CD4-positive, alpha-beta T cell (primary cell): ENCODE measurements at regions of chr15 and their contacts with region 1.

Region 1: DNA sequence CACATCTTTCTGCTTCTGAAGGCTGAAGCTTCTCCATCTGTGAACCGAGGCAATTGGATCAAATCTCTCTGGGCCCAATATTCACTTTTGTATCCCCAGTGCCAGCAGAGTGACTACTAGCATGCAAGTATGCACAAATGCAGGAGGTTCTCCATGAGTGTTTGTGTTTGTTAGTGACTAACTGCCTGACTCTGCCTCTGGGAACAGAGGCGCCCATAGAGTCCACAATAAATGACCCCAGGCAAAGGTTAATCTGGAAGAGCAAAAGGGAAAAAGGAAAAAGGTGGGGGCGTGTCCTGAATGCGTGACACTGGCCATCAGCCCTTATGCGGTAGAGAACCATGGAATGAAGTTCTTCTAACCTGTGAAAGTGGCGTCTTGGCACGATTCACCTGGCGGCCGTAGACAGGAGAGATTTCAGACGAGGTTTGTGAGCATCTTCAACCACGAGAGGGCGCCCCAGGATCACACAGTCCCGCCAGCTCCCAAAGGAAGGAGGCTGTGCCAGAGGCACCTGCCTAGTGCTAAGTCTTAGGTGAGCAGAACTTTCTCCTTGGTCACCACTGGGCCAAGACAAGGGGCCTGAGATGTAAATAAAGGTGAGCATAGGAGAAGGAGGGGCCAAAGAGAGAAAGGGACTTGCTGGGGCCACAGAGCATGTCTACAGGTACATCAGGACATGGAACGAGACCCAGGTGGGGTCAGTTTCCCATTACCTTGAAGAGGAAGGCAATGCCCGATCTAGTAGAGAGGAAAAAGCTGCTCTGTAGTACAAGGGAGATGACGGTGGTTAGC is 44.2 kb downstream of the RBPMS2 start:
- DNase-seq: peak; percentile 76 to 94 (median 85)
- ATAC-seq: peak; percentile 80
- H3K4me3 ChIP-seq: no peak overlapping the region
- H3K4me3 Mint-ChIP-seq: no peak overlapping the region
- H3K27ac ChIP-seq: no peak overlapping the region
- H3K27ac Mint-ChIP-seq: no peak overlapping the region
- H3K4me1 ChIP-seq: peaks cover 9% of the 10 kb centered on the region
- H3K4me1 Mint-ChIP-seq: peaks cover 8% of the 10 kb centered on the region
- H3K27me3 ChIP-seq: no peaks in the 10 kb centered on the region
- H3K27me3 Mint-ChIP-seq: peaks cover 9% of the 10 kb centered on the region
- CTCF ChIP-seq: peak; percentile 85

Region 2: DNA sequence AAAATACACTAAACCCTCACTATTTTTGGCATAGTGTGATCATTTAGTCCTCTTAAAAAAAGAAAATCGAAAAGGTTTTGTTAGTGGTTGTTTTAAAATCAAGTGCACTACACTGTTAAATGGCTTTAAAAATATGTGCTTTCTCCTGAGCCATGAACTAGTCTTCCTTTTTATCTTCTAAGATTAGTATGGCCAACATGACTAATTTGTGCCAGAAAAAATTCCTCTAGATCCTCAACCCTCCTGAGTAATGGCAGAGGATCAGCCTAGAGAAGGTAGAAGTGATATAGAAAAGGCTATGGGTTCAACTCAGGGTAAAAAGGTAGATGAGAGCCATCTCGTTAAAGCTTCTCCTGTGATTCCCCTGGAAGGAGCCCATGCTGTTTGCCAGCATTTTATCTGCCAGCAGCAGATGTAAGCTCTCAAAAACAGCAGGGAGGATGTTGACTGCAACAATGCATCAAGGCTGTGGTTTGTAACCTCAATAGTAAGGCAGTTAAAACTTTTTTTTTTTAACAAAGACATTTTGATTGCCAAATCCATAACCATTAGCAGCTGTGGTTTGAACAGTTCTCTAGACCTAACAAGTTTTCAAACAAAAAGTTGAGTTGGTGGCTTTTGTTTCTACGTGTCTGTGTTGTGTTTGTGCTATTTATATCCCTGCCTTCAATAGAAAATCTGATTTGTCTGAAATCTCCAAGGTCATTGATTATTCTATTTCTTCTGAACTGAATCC is 301.0 kb before region 1 on chr15:
- CTCF ChIA-PET with region 1: no interaction called
- POLR2A ChIA-PET with region 1: no interaction called
- intact Hi-C with region 1: loop called in 1 of 2 experiments (anchors 1 kb)
- DNase-seq: peak in 13 of 14 experiments; percentile 17 to 85 (median 37)
- ATAC-seq: peak; percentile 91
- H3K4me3 ChIP-seq: peak overlapping the region; percentile 12
- H3K4me3 Mint-ChIP-seq: peak overlapping the region; percentile 79
- H3K27ac ChIP-seq: peak overlapping the region; percentile 31 to 52
- H3K27ac Mint-ChIP-seq: peak overlapping the region; percentile 97
- H3K4me1 ChIP-seq: peaks cover 36% of the 10 kb centered on the region
- H3K4me1 Mint-ChIP-seq: peaks cover 52% of the 10 kb centered on the region
- H3K27me3 ChIP-seq: no peaks in the 10 kb centered on the region
- H3K27me3 Mint-ChIP-seq: no peaks in the 10 kb centered on the region
- CTCF ChIP-seq: no peak

Region 3: DNA sequence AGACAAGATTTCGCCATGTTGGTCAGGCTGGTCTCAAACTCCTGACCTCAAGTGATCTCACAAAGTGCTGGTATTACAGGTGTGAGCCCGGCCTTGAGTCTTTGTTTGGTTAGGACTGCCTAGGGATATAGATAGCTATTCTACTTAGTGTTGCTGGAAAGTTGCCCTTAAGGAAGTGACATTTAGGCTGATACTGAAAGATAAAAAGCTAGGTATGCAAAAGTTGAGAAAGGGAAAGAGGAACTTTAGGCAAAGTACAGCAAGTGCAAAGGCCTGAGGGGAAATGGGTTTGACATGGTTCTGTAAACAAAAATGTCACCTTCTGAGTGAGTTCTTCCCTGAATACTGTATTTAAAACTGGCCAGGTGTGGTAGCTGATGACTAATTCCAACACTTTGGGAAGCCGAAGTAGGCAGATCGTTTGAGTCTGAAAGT is 159.3 kb before region 1 on chr15:
- CTCF ChIA-PET with region 1: no interaction called
- POLR2A ChIA-PET with region 1: no interaction called
- intact Hi-C with region 1: no loop called
- DNase-seq: no peak
- ATAC-seq: peak; percentile 14
- H3K4me3 ChIP-seq: no peak overlapping the region
- H3K4me3 Mint-ChIP-seq: peak overlapping the region; percentile 35
- H3K27ac ChIP-seq: peak overlapping the region in 1 of 2 donors; percentile 25
- H3K27ac Mint-ChIP-seq: peak overlapping the region; percentile 89
- H3K4me1 ChIP-seq: peaks cover 17% of the 10 kb centered on the region
- H3K4me1 Mint-ChIP-seq: peaks cover 68% of the 10 kb centered on the region
- H3K27me3 ChIP-seq: no peaks in the 10 kb centered on the region
- H3K27me3 Mint-ChIP-seq: no peaks in the 10 kb centered on the region
- CTCF ChIP-seq: no peak

Region 4: GRCh38 chr15:64697911-64698369 is 33.3 kb before region 1 on chr15:
- CTCF ChIA-PET with region 1: interaction called, 11 read pairs
- POLR2A ChIA-PET with region 1: interaction called, 3 read pairs
- intact Hi-C with region 1: no loop called
- DNase-seq: no peak
- ATAC-seq: no peak
- H3K4me3 ChIP-seq: no peak overlapping the region
- H3K4me3 Mint-ChIP-seq: no peak overlapping the region
- H3K27ac ChIP-seq: peak overlapping the region in 1 of 2 donors; percentile 9
- H3K27ac Mint-ChIP-seq: peak overlapping the region; percentile 62
- H3K4me1 ChIP-seq: peaks cover 52% of the 10 kb centered on the region
- H3K4me1 Mint-ChIP-seq: peaks cover 79% of the 10 kb centered on the region
- H3K27me3 ChIP-seq: no peaks in the 10 kb centered on the region
- H3K27me3 Mint-ChIP-seq: no peaks in the 10 kb centered on the region
- CTCF ChIP-seq: no peak

Region 5: DNA sequence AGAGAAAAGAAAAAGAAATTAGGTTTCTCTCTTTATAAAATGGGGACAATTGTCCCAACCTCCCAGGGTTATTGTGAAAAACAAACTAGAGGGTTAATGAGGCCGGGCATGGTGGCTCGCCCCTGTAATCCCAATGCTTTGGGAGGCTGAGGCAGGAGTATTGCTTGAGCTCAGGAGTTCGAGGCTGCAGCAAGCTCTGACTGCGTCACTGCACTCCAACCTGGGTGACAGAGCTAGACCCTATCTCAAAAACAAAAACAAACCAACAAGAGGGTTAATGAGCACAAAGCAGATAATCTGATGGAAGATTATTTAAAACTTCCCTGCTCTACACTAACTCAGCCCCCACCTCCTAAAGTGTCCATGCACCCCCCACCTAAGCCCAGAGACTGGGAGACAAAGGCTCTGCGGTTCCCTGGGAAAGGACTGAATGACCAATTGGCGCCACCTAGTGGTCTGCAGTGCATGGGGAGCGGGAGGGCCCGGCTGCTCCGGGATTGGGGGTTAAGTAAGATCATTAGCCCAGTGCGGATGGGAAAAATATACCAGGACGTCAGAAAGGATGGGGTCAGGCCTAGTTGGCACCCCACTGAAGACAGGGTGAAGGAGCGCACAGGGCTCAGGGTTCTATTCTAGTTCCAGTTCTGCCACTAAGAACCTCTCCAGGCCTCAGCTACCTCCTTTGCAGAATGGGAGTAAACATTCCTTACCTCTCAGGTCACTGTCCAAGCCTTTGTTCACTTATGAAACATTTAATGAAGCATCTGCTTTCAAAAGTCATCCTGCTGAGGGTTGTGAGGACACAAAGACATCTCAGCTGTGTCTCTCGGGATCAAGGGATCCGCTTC is 78.7 kb after region 1 on chr15:
- CTCF ChIA-PET with region 1: interaction called, 3 read pairs
- POLR2A ChIA-PET with region 1: no interaction called
- intact Hi-C with region 1: loop called in 1 of 2 experiments (anchors 2 kb)
- DNase-seq: peak; percentile 38 to 82 (median 58)
- ATAC-seq: peak; percentile 57
- H3K4me3 ChIP-seq: no peak overlapping the region
- H3K4me3 Mint-ChIP-seq: no peak overlapping the region
- H3K27ac ChIP-seq: no peak overlapping the region
- H3K27ac Mint-ChIP-seq: no peak overlapping the region
- H3K4me1 ChIP-seq: peaks cover 6% of the 10 kb centered on the region
- H3K4me1 Mint-ChIP-seq: no peaks in the 10 kb centered on the region
- H3K27me3 ChIP-seq: peaks cover 0 to 5% of the 10 kb centered on the region in 2 experiments
- H3K27me3 Mint-ChIP-seq: no peaks in the 10 kb centered on the region
- CTCF ChIP-seq: peak; percentile 88

Region 6: GRCh38 chr15:65077981-65078352 is 346.8 kb after region 1 on chr15:
- CTCF ChIA-PET with region 1: interaction called, 4 read pairs
- POLR2A ChIA-PET with region 1: no interaction called
- intact Hi-C with region 1: loop called in 1 of 2 experiments (anchors 2 kb)
- DNase-seq: peak in 13 of 14 experiments; percentile 27 to 70 (median 44)
- ATAC-seq: peak; percentile 69
- H3K4me3 ChIP-seq: no peak overlapping the region
- H3K4me3 Mint-ChIP-seq: no peak overlapping the region
- H3K27ac ChIP-seq: no peak overlapping the region
- H3K27ac Mint-ChIP-seq: no peak overlapping the region
- H3K4me1 ChIP-seq: peaks cover 17% of the 10 kb centered on the region
- H3K4me1 Mint-ChIP-seq: peaks cover 10% of the 10 kb centered on the region
- H3K27me3 ChIP-seq: peaks cover 5 to 7% of the 10 kb centered on the region in 2 experiments
- H3K27me3 Mint-ChIP-seq: peaks cover 40% of the 10 kb centered on the region
- CTCF ChIP-seq: peak; percentile 42